Calu3 (cell line): ENCODE measurements at regions of chr18 and their contacts with region 1.

Region 1: DNA sequence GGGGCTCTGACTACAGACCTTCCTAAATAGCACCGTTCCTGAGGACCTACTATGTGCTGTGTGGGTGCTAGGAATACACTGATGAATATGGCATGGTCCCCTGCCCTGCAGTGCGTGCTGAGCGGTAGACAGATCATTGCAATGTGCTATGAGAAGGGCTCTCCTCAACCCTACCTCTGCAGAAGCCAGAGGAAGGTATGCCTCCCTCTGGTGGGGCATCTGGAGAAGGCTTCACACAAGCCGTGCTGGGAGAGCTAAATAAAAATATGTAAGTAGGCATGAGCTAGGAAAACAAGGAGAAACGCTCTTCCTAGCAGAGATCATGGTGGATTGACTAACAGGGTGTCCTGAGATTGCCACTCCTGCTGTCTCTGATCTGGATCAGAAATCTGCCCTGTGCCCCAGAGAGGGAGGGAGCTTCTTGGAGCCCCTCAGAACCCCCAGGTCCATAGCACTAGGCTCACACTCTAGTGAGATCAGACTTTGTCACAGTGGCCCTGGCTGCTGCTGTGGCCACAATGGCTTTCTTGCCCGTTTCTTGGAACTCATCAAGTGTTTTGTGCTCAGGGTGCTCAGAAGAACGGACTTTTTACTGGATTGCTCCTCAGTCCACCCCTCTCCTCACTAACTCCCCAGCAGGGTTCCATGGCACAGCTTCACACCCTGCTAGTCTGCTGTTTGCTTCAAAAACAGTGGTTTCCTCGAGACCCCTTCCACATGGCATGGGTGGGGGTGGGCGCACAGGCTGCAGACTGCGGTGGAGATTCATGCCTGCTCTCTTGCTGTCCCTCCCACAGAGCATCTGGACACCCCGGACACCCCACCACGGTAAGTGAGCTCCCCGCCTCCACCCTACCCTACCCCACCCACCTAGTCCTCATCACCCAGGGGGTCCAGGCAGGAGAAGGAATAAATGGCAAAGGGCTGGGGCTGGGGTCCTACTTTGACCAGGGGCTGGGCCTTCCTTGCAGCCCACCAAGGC is 14.2 kb downstream of the SIGLEC15 start:
- DNase-seq: peak; percentile 71
- H3K4me3 Mint-ChIP-seq: no peak overlapping the region
- H3K27ac Mint-ChIP-seq: no peak overlapping the region
- H3K4me1 Mint-ChIP-seq: peaks cover 25% of the 10 kb centered on the region
- H3K27me3 Mint-ChIP-seq: no peaks in the 10 kb centered on the region
- CTCF ChIP-seq: peak; percentile 72

Region 2: DNA sequence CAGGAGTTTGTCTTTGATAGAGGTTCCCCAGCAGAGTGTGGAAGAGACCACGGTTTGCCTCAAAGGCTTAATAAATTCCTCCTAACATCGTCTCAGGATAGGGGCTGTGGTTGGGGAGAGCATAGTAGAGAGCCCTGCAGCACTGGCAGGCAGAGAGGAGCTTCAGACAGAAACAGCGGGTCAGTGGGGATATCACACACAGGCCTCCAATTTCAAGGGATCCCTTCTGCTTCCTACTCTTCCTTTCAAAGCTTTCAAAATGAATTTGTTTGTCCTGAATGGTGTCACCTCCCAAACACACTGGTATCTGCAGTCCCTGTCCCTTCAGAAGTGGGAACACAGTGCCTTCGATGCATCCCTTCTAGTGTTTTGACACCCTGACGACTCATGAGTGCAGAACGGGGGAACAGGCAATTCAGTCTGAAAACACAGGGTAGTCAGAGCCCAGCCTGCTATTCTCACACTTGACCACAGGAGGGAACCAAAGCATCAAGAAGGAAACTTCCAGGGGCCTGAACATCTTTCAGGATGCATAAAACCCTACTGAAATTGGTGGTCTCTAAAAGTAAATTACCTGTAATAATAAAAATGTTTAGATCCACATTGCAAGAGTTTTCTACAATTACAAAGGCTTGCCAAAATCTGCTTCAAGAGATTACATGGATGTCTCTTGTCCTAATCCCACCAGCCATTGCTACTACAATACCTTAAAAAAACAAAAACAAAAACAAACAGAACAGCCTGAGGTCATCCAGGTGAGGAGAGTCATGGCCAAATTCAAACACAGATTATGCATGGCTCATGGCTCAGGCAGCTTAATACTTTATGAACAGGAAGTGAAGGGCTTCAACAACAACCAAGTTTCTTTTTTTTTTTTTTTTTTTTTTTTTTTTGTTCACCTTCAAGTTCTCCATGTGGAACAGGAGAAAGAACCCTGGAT is 174.6 kb before region 1 on chr18:
- CTCF ChIA-PET with region 1: interaction called, 7 read pairs
- intact Hi-C with region 1: loop called (anchors 1 kb)
- DNase-seq: peak; percentile 63
- H3K4me3 Mint-ChIP-seq: no peak overlapping the region
- H3K27ac Mint-ChIP-seq: no peak overlapping the region
- H3K4me1 Mint-ChIP-seq: peaks cover 16% of the 10 kb centered on the region
- H3K27me3 Mint-ChIP-seq: peaks cover 68% of the 10 kb centered on the region
- CTCF ChIP-seq: peak; percentile 74

Region 3: DNA sequence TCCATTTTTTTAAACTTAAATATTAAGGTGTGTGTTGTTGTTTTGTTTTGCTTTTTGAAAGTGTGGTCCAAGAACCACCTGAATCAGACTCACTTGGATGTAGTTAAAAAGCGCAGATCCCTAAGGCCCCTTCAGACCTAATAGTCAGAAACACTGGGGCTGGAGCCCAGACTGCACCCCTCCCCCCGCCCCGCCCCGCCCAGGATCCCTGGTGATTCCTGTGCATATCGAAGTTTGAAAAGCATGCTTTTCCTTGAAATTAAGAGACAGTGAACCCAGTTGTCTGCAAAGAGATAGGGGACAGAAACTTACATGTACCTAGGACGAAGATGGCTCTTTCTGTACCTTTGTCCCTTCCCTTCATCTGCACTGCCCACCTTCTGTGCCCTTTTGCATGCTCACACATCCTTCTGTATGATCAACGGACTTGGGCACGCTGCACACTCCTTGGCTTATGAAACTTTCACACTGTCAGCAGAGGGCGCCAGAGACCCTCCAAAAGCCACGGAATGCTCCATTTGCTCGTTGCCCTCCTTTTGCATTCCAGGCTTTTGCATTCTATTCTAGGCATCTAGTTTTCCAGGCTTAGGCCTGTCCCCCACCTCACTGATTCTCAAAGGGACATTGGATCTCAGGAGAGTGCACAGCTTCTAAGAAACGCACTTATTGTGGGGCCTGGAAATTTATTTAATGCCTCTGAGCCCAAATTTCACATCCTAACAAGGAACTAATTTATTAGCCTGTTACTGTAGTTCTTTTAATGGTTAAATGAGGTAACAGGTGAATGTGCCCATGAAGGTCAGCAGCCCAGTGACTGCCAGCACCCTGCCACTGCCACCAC is 148.5 kb before region 1 on chr18:
- CTCF ChIA-PET with region 1: interaction called, 9 read pairs
- intact Hi-C with region 1: loop called (anchors 1 kb)
- DNase-seq: peak; percentile 83
- H3K4me3 Mint-ChIP-seq: no peak overlapping the region
- H3K27ac Mint-ChIP-seq: no peak overlapping the region
- H3K4me1 Mint-ChIP-seq: no peaks in the 10 kb centered on the region
- H3K27me3 Mint-ChIP-seq: peaks cover 15% of the 10 kb centered on the region
- CTCF ChIP-seq: peak; percentile 90

Region 4: GRCh38 chr18:45722899-45723298 is 116.8 kb before region 1 on chr18:
- CTCF ChIA-PET with region 1: interaction called, 33 read pairs
- intact Hi-C with region 1: loop called (anchors 1 kb)
- DNase-seq: peak; percentile 92
- H3K4me3 Mint-ChIP-seq: no peak overlapping the region
- H3K27ac Mint-ChIP-seq: no peak overlapping the region
- H3K4me1 Mint-ChIP-seq: peaks cover 15% of the 10 kb centered on the region
- H3K27me3 Mint-ChIP-seq: peaks cover 14% of the 10 kb centered on the region
- CTCF ChIP-seq: peak; percentile 87

Region 5: DNA sequence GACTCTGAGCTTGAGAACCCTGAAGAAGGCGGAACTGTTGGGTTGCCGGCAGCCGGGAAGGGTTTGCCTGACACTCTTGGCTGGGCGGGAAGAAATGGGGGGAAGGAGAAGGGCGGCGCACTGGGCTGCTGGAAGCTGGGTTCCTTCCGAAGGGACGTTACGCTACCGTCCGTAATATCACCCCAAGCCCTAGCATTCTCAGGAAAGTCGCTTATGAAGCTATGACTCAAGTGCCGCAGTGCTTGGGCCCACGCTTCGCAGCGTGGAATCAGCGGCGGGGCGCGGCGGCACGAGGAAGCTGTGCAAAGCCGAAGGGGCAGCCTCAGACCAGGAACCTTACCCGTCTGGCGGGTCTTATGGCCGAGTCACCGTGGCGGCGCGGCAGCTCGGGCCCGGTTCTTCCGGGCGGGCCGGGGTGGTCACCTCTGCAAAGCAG is 64.4 kb before region 1 on chr18:
- CTCF ChIA-PET with region 1: no interaction called
- intact Hi-C with region 1: loop called (anchors 2 kb)
- DNase-seq: peak; percentile 86
- H3K4me3 Mint-ChIP-seq: peak overlapping the region; percentile 89
- H3K27ac Mint-ChIP-seq: peak overlapping the region; percentile 60
- H3K4me1 Mint-ChIP-seq: peaks cover 21% of the 10 kb centered on the region
- H3K27me3 Mint-ChIP-seq: peaks cover 17% of the 10 kb centered on the region
- CTCF ChIP-seq: no peak

Region 6: DNA sequence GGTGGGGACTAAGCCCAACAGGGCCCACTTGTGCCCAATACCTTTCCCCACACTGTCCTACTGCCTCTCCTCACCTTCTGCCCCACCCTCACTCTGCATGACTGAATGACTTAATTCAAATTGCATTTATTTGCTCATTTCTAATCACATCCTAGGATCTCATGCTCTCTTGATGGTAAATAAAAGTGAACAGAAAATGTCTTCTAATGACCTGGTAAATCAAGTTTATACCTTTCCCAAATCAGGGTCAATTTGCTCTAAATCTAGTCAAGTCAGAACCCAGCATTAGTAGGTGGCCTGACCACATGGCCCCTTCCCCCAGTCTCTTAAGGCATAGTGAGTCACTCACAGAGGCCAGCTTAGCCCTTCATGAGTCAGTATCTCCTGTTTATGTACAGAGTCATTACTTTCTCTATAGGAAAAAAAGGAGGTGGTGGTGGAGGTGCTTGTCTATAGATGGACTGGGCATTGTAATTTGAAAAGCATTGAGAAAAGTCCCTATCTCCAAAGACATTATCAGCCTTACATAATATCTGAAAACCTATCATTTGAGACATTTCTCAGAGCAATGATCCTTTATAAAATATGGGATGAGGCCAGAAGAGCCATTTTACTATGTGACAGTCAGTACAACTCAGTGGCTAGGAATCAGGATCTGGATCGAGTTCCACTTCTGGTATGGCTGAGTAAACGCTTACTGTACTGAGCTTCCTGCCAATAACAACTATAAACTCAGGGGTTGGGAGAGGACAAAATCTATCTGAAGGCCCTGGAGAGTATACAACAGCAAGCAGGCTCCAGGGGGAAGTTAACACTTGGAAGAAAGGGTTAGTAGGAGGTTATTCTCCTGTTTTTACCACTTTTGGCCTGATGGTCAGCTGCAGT is 36.9 kb before region 1 on chr18:
- CTCF ChIA-PET with region 1: no interaction called
- intact Hi-C with region 1: loop called (anchors 5 kb)
- DNase-seq: peak; percentile 60
- H3K4me3 Mint-ChIP-seq: peak overlapping the region; percentile 19
- H3K27ac Mint-ChIP-seq: peak overlapping the region; percentile 86
- H3K4me1 Mint-ChIP-seq: peaks cover 40% of the 10 kb centered on the region
- H3K27me3 Mint-ChIP-seq: no peaks in the 10 kb centered on the region
- CTCF ChIP-seq: no peak

Region 7: DNA sequence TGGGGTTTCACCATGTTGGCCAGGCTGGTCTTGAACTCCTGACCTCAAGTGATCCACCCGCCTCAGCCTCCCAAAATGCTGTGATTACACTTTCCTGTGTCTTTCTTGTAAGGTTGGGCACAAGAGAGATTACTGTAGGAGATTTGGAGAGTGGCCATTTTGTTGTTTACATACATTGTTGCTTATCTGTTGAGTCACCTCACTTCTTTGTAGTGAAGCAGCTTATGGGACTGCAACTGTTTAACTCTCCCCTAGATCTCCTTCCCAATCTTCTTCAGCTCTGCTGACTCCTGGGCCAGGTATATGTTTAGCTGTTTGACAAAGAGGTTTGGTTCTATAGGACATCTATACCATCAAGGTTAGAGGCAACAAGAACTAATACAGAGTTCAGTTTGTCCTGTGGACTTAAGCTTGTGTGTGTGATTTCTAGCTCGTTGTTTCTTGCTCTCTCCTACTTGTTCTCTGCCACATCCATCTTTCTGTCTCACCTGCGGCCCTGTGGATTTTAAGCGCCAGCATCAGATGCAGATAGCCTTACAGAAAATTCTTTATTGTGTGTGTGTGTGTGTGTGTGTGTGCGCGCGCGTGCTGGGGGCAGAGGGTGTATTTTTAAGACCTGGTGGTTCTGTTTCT is 359.9 kb after region 1 on chr18:
- CTCF ChIA-PET with region 1: no interaction called
- intact Hi-C with region 1: no loop called
- DNase-seq: no peak
- H3K4me3 Mint-ChIP-seq: no peak overlapping the region
- H3K27ac Mint-ChIP-seq: peak overlapping the region; percentile 22
- H3K4me1 Mint-ChIP-seq: peaks cover 20% of the 10 kb centered on the region
- H3K27me3 Mint-ChIP-seq: no peaks in the 10 kb centered on the region
- CTCF ChIP-seq: no peak